ENCODE measurements at regions of chr17 and their contacts with region 1.

Region 1: DNA sequence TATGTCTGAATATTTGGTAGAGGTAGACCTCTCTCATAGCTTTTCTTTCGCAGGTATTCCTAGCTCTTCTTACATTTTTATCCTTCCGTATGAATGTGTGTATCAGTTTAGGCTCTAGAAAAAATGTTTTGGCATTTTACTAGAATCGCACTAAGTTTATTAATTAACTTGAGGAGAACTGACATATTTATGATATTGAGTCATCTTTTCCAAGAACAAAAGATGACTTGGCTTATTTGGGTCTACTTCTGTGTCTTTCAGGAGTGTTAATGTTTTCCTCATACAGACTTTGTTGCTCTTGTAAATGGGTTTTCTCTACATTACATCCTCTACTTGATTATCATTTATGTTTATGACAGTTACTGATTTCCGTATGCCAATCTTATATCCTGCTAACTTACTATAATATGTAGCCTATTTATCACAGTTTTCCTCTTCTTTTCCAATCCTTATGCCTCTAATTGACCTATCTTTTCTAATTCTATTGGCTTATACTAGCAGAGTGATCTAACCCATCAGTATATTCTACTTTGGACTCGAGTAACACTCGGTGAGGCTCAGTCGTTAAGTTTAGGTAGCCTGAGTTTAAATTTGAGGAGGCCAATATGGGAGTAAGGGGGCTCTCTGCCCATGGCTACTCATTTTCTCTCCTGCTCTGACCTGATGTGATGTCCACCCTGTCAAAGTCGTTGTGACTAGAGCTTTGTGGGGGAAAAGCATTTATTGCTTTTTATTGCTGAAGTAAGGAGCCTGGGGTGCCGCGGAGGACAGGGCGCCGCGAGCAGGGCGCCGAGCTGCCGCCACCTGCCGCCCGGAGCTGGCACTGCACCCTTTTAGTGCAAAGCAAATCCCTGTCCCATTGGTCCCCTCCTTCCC is 20.0 kb downstream of the ST6GALNAC1 start:
- DNase-seq: peak; percentile 59 to 87 (median 74)
- ATAC-seq: peak; percentile 99
- H3K4me3 ChIP-seq: no peak overlapping the region
- H3K4me3 Mint-ChIP-seq: no peak overlapping the region
- H3K27ac ChIP-seq: no peak overlapping the region
- H3K27ac Mint-ChIP-seq: no peak overlapping the region
- H3K4me1 ChIP-seq: peaks cover 5% of the 10 kb centered on the region
- H3K4me1 Mint-ChIP-seq: peaks cover 5% of the 10 kb centered on the region
- H3K27me3 ChIP-seq: no peaks in the 10 kb centered on the region
- H3K27me3 Mint-ChIP-seq: peaks cover 10% of the 10 kb centered on the region
- CTCF ChIP-seq: peak; percentile 94

Region 2: DNA sequence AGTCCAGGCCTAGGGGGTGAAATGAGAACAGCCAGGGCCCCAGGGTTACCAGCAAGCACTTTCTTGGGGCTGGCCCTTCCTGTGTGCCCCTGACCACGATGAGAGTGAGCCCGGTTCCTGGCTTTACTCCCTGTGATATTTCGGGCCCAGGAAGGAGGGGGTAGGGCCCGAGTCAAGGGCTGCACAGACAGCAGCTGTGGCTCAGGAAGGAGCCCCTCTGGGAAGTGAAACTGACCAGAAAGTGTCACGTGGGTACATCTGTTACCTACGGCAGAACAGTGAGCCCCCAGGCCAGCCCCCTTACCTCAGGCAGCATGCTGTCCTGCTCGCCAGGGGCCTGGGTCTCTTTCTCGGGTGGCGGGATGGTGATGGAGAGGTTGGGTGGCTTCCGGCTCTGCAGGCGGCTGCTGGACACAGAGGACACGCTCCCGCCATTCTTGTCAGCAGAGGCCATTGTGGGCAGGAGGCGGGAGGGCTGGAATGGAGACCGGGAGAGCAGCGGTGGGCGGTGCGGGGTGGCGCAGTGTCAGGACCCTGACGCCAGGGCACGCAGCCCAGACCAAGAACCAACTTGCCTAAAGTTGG is 142.3 kb before region 1 on chr17:
- CTCF ChIA-PET with region 1: no interaction called
- POLR2A ChIA-PET with region 1: no interaction called
- intact Hi-C with region 1: no loop called
- DNase-seq: no peak
- ATAC-seq: no peak
- H3K4me3 ChIP-seq: no peak overlapping the region
- H3K4me3 Mint-ChIP-seq: no peak overlapping the region
- H3K27ac ChIP-seq: no peak overlapping the region
- H3K27ac Mint-ChIP-seq: no peak overlapping the region
- H3K4me1 ChIP-seq: peaks cover 3% of the 10 kb centered on the region
- H3K4me1 Mint-ChIP-seq: no peaks in the 10 kb centered on the region
- H3K27me3 ChIP-seq: no peaks in the 10 kb centered on the region
- H3K27me3 Mint-ChIP-seq: no peaks in the 10 kb centered on the region
- CTCF ChIP-seq: no peak

Region 3: DNA sequence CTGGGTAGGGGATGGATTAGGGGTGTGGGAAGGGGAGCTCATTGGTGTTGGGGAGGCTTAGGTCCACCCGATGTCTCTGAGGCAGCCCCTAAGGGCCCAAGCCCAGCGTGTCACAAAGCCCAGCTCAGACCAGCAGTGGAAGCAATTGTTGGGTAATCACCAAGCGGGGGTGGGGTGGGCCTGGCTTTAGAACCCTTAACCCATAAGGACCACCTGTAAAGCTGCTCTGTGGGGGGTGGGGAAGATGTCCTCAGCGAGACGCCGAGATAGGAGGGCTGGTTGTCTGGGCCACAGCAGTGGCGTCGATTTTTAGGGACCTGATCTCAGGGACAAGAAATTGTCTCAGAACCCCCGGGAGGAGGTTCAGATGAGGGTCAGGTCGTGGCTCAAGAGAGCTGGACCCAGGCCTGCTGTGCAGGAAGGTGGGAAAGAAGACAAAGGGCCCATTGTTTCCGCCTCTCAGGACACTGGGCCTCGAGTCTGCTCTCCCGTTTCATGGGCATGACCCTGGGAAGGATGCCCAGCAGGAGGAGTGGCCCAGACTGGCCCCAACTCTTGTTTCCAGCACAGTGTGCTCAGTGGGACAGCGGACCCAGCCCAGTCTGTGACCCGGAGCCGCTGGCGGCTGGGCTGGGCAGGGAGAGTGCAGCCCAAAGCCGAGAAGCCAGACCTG is 53.8 kb before region 1 on chr17:
- CTCF ChIA-PET with region 1: no interaction called
- POLR2A ChIA-PET with region 1: no interaction called
- intact Hi-C with region 1: loop called in 1 of 2 experiments (anchors 10 kb)
- DNase-seq: no peak
- ATAC-seq: no peak
- H3K4me3 ChIP-seq: no peak overlapping the region
- H3K4me3 Mint-ChIP-seq: no peak overlapping the region
- H3K27ac ChIP-seq: no peak overlapping the region
- H3K27ac Mint-ChIP-seq: no peak overlapping the region
- H3K4me1 ChIP-seq: peaks cover 20% of the 10 kb centered on the region
- H3K4me1 Mint-ChIP-seq: peaks cover 27% of the 10 kb centered on the region
- H3K27me3 ChIP-seq: no peaks in the 10 kb centered on the region
- H3K27me3 Mint-ChIP-seq: peaks cover 4% of the 10 kb centered on the region
- CTCF ChIP-seq: no peak

Region 4: GRCh38 chr17:76681222-76682137 is 58.0 kb after region 1 on chr17:
- CTCF ChIA-PET with region 1: interaction called, 28 read pairs
- POLR2A ChIA-PET with region 1: interaction called, 6 read pairs
- intact Hi-C with region 1: loop called in 1 of 2 experiments (anchors 5 kb)
- DNase-seq: peak; percentile 63 to 85 (median 72)
- ATAC-seq: peak; percentile 86
- H3K4me3 ChIP-seq: no peak overlapping the region
- H3K4me3 Mint-ChIP-seq: no peak overlapping the region
- H3K27ac ChIP-seq: no peak overlapping the region
- H3K27ac Mint-ChIP-seq: peak overlapping the region; percentile 53
- H3K4me1 ChIP-seq: peaks cover 45% of the 10 kb centered on the region
- H3K4me1 Mint-ChIP-seq: peaks cover 11% of the 10 kb centered on the region
- H3K27me3 ChIP-seq: no peaks in the 10 kb centered on the region
- H3K27me3 Mint-ChIP-seq: no peaks in the 10 kb centered on the region
- CTCF ChIP-seq: peak; percentile 65

Region 5: DNA sequence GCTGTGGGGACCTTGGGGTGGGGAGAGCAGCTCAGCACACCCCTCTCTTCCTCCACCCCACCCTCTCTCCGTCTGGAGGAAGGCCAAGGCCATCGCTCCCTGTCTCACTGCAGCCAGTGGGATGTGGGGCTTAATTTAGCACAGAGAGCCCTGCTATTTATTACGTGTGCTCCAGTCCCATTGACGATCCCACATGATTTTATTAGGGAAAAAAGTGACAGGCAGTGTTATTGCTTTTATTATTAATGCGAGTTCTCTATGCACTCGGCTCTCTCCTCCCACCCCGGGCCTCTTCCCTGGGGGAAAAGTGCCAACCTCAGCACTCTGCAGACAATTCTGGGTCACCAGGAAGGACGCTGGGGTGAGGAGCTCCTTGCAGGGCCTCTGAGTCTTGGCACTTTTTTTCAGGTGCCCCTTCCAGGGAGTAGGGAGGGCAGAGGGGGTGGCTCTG is 302.0 kb after region 1 on chr17:
- CTCF ChIA-PET with region 1: no interaction called
- POLR2A ChIA-PET with region 1: no interaction called
- intact Hi-C with region 1: no loop called
- DNase-seq: no peak
- ATAC-seq: no peak
- H3K4me3 ChIP-seq: no peak overlapping the region
- H3K4me3 Mint-ChIP-seq: no peak overlapping the region
- H3K27ac ChIP-seq: no peak overlapping the region
- H3K27ac Mint-ChIP-seq: no peak overlapping the region
- H3K4me1 ChIP-seq: peaks cover 6% of the 10 kb centered on the region
- H3K4me1 Mint-ChIP-seq: no peaks in the 10 kb centered on the region
- H3K27me3 ChIP-seq: no peaks in the 10 kb centered on the region
- H3K27me3 Mint-ChIP-seq: no peaks in the 10 kb centered on the region
- CTCF ChIP-seq: no peak

Measured in CD4-positive, alpha-beta T cell (primary cell).